GM12878 (cell line): ENCODE measurements at regions of chr2 and their contacts with region 1.

Region 1: DNA sequence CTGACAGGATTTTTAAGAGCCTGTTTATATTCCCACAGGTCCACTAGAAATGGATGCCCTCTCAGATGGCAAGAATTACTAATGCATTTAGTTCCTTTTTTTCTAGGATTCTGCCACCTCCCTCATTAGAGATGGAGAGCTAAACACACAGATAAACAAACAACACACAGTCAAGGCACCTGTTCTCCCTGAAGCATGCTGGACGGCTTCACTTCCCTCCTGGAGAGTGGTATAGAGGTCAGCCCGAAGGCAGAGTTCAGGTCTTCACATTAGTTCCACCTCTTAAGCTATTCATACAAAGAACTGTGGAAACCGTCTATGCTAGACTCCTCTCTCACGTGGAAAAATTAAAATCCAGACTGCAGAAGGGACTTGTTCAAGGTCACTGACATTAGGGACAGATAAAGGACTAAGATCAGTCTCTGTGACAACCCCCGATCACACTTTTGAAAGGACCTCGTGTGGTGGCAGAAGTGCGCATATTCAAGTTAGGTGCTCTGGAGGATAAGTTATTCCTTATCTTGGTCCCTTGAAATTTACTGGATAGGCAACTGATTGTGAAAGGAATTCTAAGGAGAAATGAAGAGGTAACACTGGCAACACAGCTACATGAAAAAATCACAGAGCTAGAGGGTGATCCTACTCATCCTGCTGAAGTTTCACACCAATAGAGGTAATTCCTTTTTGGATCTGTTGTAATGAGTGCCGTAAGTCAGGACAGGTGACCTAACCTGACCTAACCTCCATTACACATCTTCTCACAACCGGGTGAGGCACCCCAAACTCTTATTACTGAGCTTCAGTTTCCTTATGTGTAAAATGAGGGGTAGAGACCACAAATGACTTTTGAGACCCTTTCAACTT is 75.1 kb downstream of the SPRED2 start:
- DNase-seq: no peak
- ATAC-seq: peak; percentile 75
- H3K4me3 ChIP-seq: 0 out of 2 replicates have a peak overlapping the region, but pooled peaks have one; percentile 38
- H3K27ac ChIP-seq: peak overlapping the region; percentile 75
- H3K4me1 ChIP-seq: peaks cover 41% of the 10 kb centered on the region
- H3K27me3 ChIP-seq: no peaks in the 10 kb centered on the region
- CTCF ChIP-seq: no peak
- EP300 ChIP-seq: no peak
- POLR2A ChIP-seq: no peak
- RAD21 ChIP-seq: no peak

Region 2: GRCh38 chr2:65320042-65320725 is 37.1 kb before region 1 on chr2:
- CTCF ChIA-PET with region 1: interaction called, 5 read pairs
- POLR2A ChIA-PET with region 1: interaction called, 10 read pairs
- RAD21 ChIA-PET with region 1: interaction called, 17 read pairs
- SMC1A ChIA-PET with region 1: interaction called, 20 read pairs
- in situ Hi-C with region 1: no loop called
- intact Hi-C with region 1: no loop called
- DNase-seq: peak; percentile 30
- ATAC-seq: peak; percentile 84
- H3K4me3 ChIP-seq: no peak overlapping the region
- H3K27ac ChIP-seq: peak overlapping the region; percentile 22
- H3K4me1 ChIP-seq: peaks cover 36% of the 10 kb centered on the region
- H3K27me3 ChIP-seq: no peaks in the 10 kb centered on the region
- CTCF ChIP-seq: peak; percentile 22 to 47 (median 42); a peak in 5 of 6 replicates
- EP300 ChIP-seq: peak in 1 of 2 experiments; percentile 57; a peak in 1 of 4 replicates
- POLR2A ChIP-seq: no peak
- RAD21 ChIP-seq: peak; percentile 48

Region 3: GRCh38 chr2:65382776-65383357 is 25.5 kb after region 1 on chr2:
- CTCF ChIA-PET with region 1: interaction called, 5 read pairs
- POLR2A ChIA-PET with region 1: interaction called, 7 read pairs
- RAD21 ChIA-PET with region 1: interaction called, 28 read pairs
- SMC1A ChIA-PET with region 1: interaction called, 29 read pairs
- in situ Hi-C with region 1: no loop called
- intact Hi-C with region 1: loop called (anchors 2 kb)
- DNase-seq: no peak
- ATAC-seq: no peak
- H3K4me3 ChIP-seq: no peak overlapping the region
- H3K27ac ChIP-seq: peak overlapping the region; percentile 65
- H3K4me1 ChIP-seq: peaks cover 42% of the 10 kb centered on the region
- H3K27me3 ChIP-seq: no peaks in the 10 kb centered on the region
- CTCF ChIP-seq: peak in 1 of 3 experiments; percentile 37; a peak in 2 of 6 replicates
- EP300 ChIP-seq: no peak
- POLR2A ChIP-seq: no peak
- RAD21 ChIP-seq: peak; percentile 63

Region 4: GRCh38 chr2:65396348-65397026 is 39.2 kb after region 1 on chr2:
- CTCF ChIA-PET with region 1: interaction called, 3 read pairs
- POLR2A ChIA-PET with region 1: interaction called, 6 read pairs
- RAD21 ChIA-PET with region 1: no interaction called
- SMC1A ChIA-PET with region 1: interaction called, 15 read pairs
- in situ Hi-C with region 1: no loop called
- intact Hi-C with region 1: no loop called
- DNase-seq: no peak
- ATAC-seq: peak; percentile 31
- H3K4me3 ChIP-seq: no peak overlapping the region
- H3K27ac ChIP-seq: peak overlapping the region; percentile 22
- H3K4me1 ChIP-seq: peaks cover 53% of the 10 kb centered on the region
- H3K27me3 ChIP-seq: no peaks in the 10 kb centered on the region
- CTCF ChIP-seq: no peak
- EP300 ChIP-seq: no peak
- POLR2A ChIP-seq: no peak
- RAD21 ChIP-seq: no peak

Region 5: DNA sequence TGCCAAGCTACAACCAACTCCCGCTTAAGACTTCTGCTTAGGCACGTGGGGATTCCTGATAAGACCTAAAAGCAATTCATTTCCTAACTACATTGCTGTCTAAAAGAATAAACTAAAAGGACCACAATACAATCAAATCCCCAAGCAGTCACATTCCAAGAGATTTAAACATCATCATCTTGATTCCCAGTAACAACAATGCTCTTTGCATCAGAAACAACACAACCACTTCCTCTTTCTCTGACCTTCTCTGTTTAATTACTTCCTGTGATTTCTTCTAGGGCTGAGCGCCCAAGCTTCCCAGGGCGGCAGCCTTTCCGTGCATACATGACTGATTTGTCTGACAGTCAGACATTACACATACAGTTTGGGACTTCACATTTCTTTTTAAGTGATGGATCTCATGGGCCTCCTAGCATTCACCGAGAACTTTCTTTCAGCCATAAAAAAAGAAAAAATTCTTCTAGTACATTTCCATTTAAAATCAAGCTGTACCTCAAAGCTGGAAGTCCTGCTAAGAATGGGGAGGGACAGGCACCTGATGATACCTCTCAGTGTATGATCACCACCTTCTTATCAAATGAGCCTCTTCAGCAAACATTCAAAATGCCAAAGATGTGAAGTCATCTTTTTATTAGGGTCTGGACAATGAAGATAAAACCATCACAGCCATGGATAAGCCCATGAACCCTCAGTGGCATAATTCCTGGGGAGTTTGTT is 63.5 kb after region 1 on chr2:
- CTCF ChIA-PET with region 1: interaction called, 5 read pairs
- POLR2A ChIA-PET with region 1: interaction called, 4 read pairs
- RAD21 ChIA-PET with region 1: interaction called, 9 read pairs
- SMC1A ChIA-PET with region 1: interaction called, 10 read pairs
- in situ Hi-C with region 1: no loop called
- intact Hi-C with region 1: no loop called
- DNase-seq: no peak
- ATAC-seq: peak; percentile 85
- H3K4me3 ChIP-seq: peak overlapping the region; percentile 3; the same call in 1 of the 2 replicates
- H3K27ac ChIP-seq: peak overlapping the region; percentile 49
- H3K4me1 ChIP-seq: peaks cover 28% of the 10 kb centered on the region
- H3K27me3 ChIP-seq: no peaks in the 10 kb centered on the region
- CTCF ChIP-seq: no peak
- EP300 ChIP-seq: peak; percentile 19 to 32; a peak in 1 of 4 replicates
- POLR2A ChIP-seq: no peak
- RAD21 ChIP-seq: 0 out of 2 replicates have a peak, but pooled peaks have one; percentile 2

Region 6: DNA sequence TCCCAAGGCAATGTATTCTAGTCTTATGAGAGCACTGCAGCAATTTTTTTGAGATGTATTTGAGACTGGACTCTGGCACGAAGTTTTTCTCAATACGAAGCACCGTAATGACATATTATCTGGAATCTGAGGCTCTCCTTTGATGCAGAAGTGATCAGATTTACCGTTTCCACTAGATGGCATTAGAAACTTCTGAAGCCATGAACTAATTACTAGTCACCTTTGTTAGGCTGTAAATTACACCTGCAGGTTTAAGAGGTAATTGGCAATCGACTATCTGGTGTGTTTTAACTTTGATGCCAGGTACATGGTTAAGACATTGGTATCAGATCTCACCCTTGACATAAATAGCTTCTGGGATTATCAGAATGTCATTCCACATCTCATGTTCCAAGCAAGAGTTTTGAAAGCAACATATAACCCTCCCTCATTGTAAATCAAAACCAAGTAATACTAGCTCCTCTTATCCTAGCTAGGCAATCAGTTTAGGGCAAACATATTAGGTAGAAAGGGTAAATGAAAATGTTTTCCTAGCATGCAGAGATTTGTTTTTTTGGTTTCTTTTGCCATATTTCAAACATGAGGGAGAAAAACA is 329.7 kb after region 1 on chr2:
- CTCF ChIA-PET with region 1: no interaction called
- POLR2A ChIA-PET with region 1: no interaction called
- RAD21 ChIA-PET with region 1: no interaction called
- SMC1A ChIA-PET with region 1: no interaction called
- in situ Hi-C with region 1: no loop called
- intact Hi-C with region 1: no loop called
- DNase-seq: no peak
- ATAC-seq: no peak
- H3K4me3 ChIP-seq: no peak overlapping the region
- H3K27ac ChIP-seq: no peak overlapping the region
- H3K4me1 ChIP-seq: no peaks in the 10 kb centered on the region
- H3K27me3 ChIP-seq: 0 out of 4 replicates have a peak, but pooled peaks cover 0 to 1% of the 10 kb centered on the region in 2 experiments
- CTCF ChIP-seq: 0 out of 6 replicates have a peak, but pooled peaks of 1 of the 3 experiments have one; percentile 5
- EP300 ChIP-seq: no peak
- POLR2A ChIP-seq: no peak
- RAD21 ChIP-seq: peak; percentile 23; the same call in 1 of the 2 replicates